ENCODE measurements at regions of chr11 and their contacts with region 1.

Region 1: GRCh38 chr11:126246636-126247035 is 22.1 kb downstream of the SRPRA start:
- DNase-seq: peak; percentile 92
- H3K4me3 ChIP-seq: no peak overlapping the region
- H3K27ac ChIP-seq: peak overlapping the region; percentile 73
- H3K4me1 ChIP-seq: peaks cover 13% of the 10 kb centered on the region
- H3K27me3 ChIP-seq: no peaks in the 10 kb centered on the region
- CTCF ChIP-seq: no peak
- POLR2A ChIP-seq: no peak

Region 2: DNA sequence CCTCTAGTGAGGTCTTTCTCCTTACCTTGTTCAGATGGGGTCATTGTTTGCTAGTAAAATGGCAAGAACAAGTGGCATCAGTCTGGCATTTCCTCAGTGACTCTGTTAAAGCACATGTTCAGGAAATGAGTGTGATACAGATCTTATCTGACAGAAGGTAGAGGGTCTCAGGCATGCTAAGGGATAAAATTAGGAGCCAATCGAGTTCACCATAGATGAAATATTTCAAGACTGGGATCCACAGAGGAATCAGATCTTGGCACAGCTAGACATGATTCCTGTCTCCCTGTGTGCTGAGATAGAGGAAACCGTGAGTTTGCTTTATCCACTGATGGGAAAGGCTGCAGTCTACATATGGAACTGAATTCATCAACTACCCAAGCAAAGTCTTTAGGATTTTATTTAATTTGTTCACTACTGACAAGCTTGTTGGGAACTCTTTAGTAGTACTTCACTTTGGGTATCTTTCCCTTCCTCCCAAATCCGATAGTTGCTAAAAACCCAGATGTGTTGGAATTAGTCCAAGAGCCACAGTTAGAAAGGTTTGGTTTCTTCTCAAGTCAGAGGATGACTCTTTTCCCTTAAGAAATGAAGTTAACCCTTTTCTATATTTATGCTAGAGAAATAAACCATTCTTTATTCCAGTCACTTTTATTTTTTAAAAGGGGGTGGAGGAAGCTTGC is 16.6 kb before region 1 on chr11:
- CTCF ChIA-PET with region 1: interaction called, 6 read pairs
- POLR2A ChIA-PET with region 1: no interaction called
- dilution Hi-C with region 1: no loop called
- intact Hi-C with region 1: loop called (anchors 1 kb)
- DNase-seq: peak; percentile 54
- H3K4me3 ChIP-seq: no peak overlapping the region
- H3K27ac ChIP-seq: peak overlapping the region; percentile 61
- H3K4me1 ChIP-seq: peaks cover 30% of the 10 kb centered on the region
- H3K27me3 ChIP-seq: no peaks in the 10 kb centered on the region
- CTCF ChIP-seq: no peak
- POLR2A ChIP-seq: no peak

Measured in endothelial cell of umbilical vein (primary cell).